Colonic mucosa (tissue), 4 donors: ENCODE measurements at regions of chr1 and their contacts with region 1.

Region 1: DNA sequence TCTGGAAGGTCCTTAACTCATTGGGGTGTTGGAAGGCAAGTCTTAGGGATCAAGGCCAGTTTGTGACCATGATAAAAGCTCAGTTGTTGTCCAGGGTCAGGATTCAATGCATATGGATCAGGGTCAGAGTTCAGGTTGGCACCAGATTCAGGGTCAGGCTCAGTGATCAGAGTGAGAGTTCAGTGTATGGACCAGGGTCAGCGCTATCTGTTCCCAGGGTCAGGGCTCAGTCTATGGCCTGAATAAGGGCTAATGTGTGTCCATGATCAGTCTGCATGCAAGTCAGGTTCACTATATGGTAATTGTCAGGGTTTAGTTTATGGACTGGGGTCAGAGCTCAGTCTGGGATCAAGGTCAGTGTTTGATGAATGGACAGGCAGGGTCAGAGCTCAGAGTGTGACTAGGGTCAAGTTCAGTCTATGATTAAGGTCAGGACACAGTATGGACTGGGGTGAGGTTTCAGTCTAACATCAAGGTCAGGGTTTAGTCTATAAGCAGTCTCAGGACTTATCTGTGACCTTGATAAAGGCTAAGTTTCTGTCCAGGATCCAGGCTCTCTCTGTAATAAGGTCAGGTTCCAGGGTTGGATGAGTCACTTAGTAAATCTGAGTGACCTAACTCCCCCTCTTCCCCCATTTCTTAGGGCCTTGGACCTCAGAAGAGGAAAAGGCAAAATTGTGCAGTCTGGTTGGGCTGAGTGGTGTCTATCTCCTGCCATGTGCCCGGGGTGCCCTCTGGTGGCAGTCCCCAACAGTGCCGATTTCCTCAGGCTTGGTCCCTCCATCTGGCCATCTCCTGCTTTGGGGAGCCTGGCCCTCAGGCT is 23.8 kb downstream of the KNCN start:
- DNase-seq: peak; percentile 88
- H3K4me3 ChIP-seq: no peak overlapping the region
- H3K27ac ChIP-seq: no peak overlapping the region
- H3K4me1 ChIP-seq: no peaks in the 10 kb centered on the region
- H3K27me3 ChIP-seq: no peaks in the 10 kb centered on the region
- CTCF ChIP-seq: peak; percentile 82

Region 2: DNA sequence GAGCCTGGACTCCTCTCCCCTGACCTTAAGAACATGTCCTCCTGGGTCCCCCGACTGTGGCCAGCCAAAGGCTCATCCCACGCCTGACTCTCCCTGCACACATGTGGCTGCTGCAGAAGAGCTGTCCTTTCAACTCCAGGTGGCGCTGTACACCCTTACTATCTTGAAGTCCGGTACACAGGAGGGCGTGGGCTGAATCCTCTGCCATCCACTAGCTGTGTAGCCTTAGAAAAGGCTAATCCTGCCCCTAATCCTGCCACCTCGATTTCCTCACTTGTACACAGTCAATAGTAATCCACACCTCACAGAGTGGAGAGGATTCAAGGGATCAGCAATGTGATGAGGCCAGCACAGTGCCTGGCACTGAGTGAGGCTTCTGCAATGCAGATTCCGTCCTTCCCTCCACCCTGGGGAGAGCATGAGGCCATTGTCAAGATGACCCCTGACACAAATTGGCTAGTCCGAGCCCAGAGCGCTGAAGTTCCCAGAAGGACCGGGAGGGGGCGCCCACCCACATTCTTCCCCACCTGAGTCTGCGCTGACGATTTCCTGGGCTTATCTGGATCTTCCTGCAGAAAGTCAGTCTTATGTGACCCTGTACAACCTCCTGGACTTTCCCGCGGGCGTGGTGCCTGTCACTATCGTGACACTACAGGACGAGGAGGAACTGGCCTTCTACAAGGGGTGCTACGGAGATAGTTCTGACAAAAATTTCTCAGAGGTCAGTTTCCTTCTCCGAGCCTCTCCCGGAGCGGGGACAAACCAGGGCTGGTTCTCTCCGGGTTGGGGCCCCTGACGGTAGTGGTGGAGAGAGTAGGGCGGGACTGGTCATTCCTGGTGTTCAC is 85.1 kb before region 1 on chr1:
- intact Hi-C with region 1: loop called (anchors 5 kb)
- DNase-seq: peak; percentile 89
- H3K4me3 ChIP-seq: peak overlapping the region; percentile 12
- H3K27ac ChIP-seq: no peak overlapping the region
- H3K4me1 ChIP-seq: no peaks in the 10 kb centered on the region
- H3K27me3 ChIP-seq: peaks cover 7% of the 10 kb centered on the region
- CTCF ChIP-seq: peak; percentile 98

Region 3: GRCh38 chr1:46479744-46480350 is 47.8 kb before region 1 on chr1:
- intact Hi-C with region 1: loop called (anchors 2 kb)
- DNase-seq: no peak
- H3K4me3 ChIP-seq: no peak overlapping the region
- H3K27ac ChIP-seq: no peak overlapping the region
- H3K4me1 ChIP-seq: no peaks in the 10 kb centered on the region
- H3K27me3 ChIP-seq: no peaks in the 10 kb centered on the region
- CTCF ChIP-seq: no peak

Region 4: GRCh38 chr1:46724991-46725735 is 197.5 kb after region 1 on chr1:
- intact Hi-C with region 1: loop called (anchors 5 kb)
- DNase-seq: peak; percentile 75
- H3K4me3 ChIP-seq: no peak overlapping the region
- H3K27ac ChIP-seq: no peak overlapping the region
- H3K4me1 ChIP-seq: no peaks in the 10 kb centered on the region
- H3K27me3 ChIP-seq: peaks cover 3% of the 10 kb centered on the region
- CTCF ChIP-seq: peak; percentile 71